Aorta (tissue), 5 donors: ENCODE measurements at regions of chr9 and their contacts with region 1.

Region 1: GRCh38 chr9:15317836-15318235 is 10.8 kb upstream of the TTC39B start:
- DNase-seq: no peak
- ATAC-seq: no peak
- H3K4me3 ChIP-seq: no peak overlapping the region
- H3K27ac ChIP-seq: no peak overlapping the region
- H3K4me1 ChIP-seq: no peaks in the 10 kb centered on the region
- H3K27me3 ChIP-seq: no peaks in the 10 kb centered on the region

Region 2: DNA sequence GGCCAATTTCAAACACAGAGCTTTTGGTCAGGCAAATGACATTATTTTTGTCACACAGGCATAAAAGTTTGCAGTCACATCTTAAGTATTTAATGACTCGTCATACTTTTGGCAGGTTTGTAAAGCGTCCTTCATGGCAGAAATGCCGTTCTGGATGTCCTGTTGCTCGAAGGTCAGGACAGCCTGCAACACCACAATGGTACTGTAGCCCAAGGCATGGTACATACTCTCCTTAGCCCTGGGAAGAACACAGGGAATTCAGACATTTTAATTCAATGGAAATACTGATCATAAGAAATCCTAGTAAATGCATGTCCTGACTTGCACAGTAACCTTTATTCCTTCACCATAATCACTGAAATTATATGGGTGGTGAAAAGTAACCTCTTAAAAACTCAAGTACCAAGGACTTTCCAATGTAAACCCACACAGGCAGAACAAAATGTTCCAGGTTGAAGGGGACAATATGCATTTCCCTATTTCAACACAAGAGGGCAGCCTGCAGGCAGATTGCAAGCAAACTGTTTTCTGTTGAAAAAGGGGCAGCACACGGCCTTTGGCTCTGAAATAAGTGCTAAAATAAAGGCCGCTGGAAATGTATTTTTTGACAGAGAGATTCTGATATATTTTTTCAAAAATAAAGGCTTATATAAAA is 106.5 kb before region 1 on chr9:
- intact Hi-C with region 1: no loop called
- DNase-seq: peak in 1 of 2 donors; percentile 46
- ATAC-seq: peak; percentile 89
- H3K4me3 ChIP-seq: peak overlapping the region in 1 of 2 donors; percentile 16
- H3K27ac ChIP-seq: peak overlapping the region; percentile 46 to 84
- H3K4me1 ChIP-seq: peaks cover 0 to 7% of the 10 kb centered on the region in 2 donors
- H3K27me3 ChIP-seq: no peaks in the 10 kb centered on the region

Region 3: GRCh38 chr9:15370466-15371447 is 52.9 kb after region 1 on chr9:
- intact Hi-C with region 1: loop called in 1 of 2 experiments (anchors 10 kb)
- DNase-seq: no peak
- ATAC-seq: no peak
- H3K4me3 ChIP-seq: no peak overlapping the region
- H3K27ac ChIP-seq: no peak overlapping the region
- H3K4me1 ChIP-seq: no peaks in the 10 kb centered on the region
- H3K27me3 ChIP-seq: no peaks in the 10 kb centered on the region

Region 4: DNA sequence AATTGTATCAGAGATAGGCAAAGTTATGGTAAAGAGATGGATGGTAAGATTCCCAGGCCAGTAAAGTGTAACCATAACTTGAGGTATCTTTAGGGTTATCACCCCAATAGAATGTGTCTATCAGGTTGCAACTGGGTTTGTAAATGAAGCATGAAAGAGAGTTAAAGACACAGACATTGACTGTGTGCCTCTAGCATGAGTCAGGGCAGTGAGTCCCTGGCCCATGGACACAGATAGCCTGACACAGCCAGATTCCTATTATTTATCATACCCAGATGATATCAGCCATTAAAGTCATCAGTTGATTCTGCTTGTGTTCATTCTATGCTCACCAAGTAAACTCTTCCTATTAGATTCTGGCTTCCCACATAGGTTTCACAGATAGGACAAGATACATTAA is 71.3 kb after region 1 on chr9:
- intact Hi-C with region 1: no loop called
- DNase-seq: no peak
- ATAC-seq: no peak
- H3K4me3 ChIP-seq: no peak overlapping the region
- H3K27ac ChIP-seq: no peak overlapping the region
- H3K4me1 ChIP-seq: peaks cover 0 to 1% of the 10 kb centered on the region in 2 donors
- H3K27me3 ChIP-seq: no peaks in the 10 kb centered on the region